ENCODE measurements at regions of chr11 and their contacts with region 1.

Region 1: DNA sequence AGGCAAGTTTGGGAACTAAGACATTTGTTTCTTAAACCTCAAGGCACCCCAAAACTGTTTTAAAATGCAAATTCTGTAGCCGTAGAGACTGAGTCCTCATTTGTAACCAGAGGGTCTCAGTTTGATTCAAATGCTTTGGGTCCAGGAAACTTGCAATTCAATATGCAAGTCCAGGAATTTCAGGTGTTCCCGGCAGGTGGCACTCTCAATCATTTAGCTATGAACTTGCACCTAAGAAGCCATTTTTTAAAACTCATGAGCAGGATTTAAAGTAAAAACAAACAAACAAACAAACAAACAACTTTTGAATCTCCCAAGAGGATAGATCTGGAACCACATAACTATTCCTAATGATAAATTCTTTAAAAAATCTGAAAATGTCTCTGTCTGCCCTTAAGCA is 8.7 kb upstream of the ABTB2 start:
- H3K4me3 ChIP-seq: no peak overlapping the region
- H3K27ac ChIP-seq: no peak overlapping the region
- H3K4me1 ChIP-seq: no peaks in the 10 kb centered on the region
- CTCF ChIP-seq: no peak

Region 2: GRCh38 chr11:34114471-34114870 is 252.1 kb before region 1 on chr11:
- CTCF ChIA-PET with region 1: no interaction called
- POLR2A ChIA-PET with region 1: interaction called, 12 read pairs
- H3K4me3 ChIP-seq: no peak overlapping the region
- H3K27ac ChIP-seq: no peak overlapping the region
- H3K4me1 ChIP-seq: no peaks in the 10 kb centered on the region
- CTCF ChIP-seq: no peak

Region 3: GRCh38 chr11:34223021-34223813 is 143.3 kb before region 1 on chr11:
- CTCF ChIA-PET with region 1: no interaction called
- POLR2A ChIA-PET with region 1: no interaction called
- H3K4me3 ChIP-seq: no peak overlapping the region
- H3K27ac ChIP-seq: peak overlapping the region; percentile 32
- H3K4me1 ChIP-seq: peaks cover 5% of the 10 kb centered on the region
- CTCF ChIP-seq: no peak

Region 4: DNA sequence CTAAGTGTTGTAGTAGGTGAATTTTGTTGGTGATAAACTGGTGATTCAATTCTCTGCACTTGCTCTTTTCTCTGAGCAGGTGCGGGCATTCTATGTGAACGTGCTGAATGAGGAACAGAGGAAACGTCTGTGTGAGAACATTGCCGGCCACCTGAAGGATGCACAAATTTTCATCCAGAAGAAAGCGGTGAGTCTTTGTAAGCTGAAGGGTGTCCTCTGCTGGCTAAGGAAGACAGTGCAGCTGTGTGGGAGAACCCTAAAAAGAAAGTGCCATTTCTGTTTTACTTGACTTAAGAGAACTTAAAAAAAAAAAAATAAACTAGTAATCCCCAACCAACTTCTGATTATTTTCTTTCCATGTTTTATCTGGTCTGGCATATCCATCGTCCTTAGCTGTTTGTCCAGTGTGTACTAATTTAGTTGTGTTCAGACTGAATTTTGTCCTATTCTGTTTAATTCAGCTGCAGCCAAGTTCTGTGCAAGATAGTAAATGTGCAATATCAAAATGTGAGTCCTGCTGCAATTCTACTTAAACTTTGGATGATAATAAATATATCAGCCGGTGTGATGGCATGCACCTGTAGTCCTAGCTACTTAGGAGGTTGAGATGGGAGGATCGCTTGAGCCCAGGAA is 101.8 kb after region 1 on chr11:
- CTCF ChIA-PET with region 1: interaction called, 33 read pairs
- POLR2A ChIA-PET with region 1: no interaction called
- H3K4me3 ChIP-seq: no peak overlapping the region
- H3K27ac ChIP-seq: no peak overlapping the region
- H3K4me1 ChIP-seq: no peaks in the 10 kb centered on the region
- CTCF ChIP-seq: no peak

Region 5: DNA sequence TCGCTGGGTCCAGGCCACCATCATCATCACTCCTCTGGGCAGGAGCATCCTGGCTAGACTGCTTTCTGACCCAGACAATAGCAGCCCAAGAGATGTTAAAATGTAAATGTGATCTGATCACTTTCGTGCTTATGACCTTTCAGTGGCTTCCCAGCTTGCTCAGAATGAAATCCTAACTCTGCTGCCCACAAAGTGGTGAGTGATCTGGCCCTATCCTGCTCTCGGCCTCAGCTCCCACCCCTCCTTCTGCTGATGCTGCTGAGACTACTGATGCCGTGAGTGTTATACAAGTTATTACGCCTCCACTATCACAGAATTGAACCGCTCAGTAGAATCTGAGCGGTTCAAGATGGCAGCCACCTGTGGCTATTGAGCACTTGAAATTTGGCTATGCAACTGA is 120.9 kb after region 1 on chr11:
- CTCF ChIA-PET with region 1: interaction called, 105 read pairs
- POLR2A ChIA-PET with region 1: no interaction called
- H3K4me3 ChIP-seq: no peak overlapping the region
- H3K27ac ChIP-seq: no peak overlapping the region
- H3K4me1 ChIP-seq: no peaks in the 10 kb centered on the region
- CTCF ChIP-seq: no peak

Region 6: GRCh38 chr11:34492806-34493414 is 126.4 kb after region 1 on chr11:
- CTCF ChIA-PET with region 1: interaction called, 105 read pairs
- POLR2A ChIA-PET with region 1: no interaction called
- H3K4me3 ChIP-seq: no peak overlapping the region
- H3K27ac ChIP-seq: no peak overlapping the region
- H3K4me1 ChIP-seq: no peaks in the 10 kb centered on the region
- CTCF ChIP-seq: no peak; the same call in 1 of the 2 replicates